ENCODE measurements at regions of chr5 and their contacts with region 1.

Region 1: DNA sequence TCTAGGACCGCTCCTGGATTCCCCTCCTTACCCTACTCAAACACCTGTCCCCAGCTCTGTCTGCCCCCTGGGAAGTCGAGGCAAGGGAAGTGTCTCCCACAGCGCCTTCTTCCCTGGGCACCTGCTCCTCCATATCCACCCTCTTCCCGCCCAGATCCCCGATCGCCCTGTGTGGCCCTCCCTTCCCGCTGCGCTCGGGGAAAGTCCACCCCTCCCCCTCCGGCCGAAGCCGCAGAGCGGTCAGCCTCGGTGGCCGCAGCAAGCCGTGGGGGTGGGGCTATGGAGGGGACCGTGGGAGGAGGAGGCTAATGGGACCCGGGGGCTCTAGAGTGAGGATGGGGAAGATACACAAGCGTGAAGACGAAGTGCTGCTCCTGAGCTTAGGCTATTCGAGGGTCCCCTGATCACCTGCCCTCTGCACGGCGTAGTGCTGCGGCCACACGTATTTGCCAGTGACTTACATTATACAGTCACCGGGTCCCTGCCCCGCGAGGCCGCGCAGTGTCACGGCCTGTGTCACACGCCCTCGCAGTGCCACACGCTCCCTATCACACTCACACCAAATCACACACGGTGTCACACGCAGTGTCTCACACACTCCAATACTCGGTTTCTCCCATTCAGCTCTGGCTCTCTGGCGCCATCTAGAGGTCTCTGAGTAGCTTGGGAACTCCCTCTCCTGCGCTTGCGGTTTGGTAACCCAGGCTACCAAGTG is 658 bp upstream of the PCDH1 start:
- DNase-seq: peak; percentile 80
- ATAC-seq: peak; percentile 82
- H3K4me3 ChIP-seq: peak overlapping the region; percentile 40
- H3K27ac ChIP-seq: no peak overlapping the region
- H3K4me1 ChIP-seq: peaks cover 8% of the 10 kb centered on the region; the same call in 1 of the 2 replicates
- H3K27me3 ChIP-seq: peaks cover 85% of the 10 kb centered on the region
- CTCF ChIP-seq: peak; percentile 96
- POLR2A ChIP-seq: 0 out of 2 replicates have a peak, but pooled peaks have one; percentile 48
- RAD21 ChIP-seq: peak; percentile 95

Region 2: DNA sequence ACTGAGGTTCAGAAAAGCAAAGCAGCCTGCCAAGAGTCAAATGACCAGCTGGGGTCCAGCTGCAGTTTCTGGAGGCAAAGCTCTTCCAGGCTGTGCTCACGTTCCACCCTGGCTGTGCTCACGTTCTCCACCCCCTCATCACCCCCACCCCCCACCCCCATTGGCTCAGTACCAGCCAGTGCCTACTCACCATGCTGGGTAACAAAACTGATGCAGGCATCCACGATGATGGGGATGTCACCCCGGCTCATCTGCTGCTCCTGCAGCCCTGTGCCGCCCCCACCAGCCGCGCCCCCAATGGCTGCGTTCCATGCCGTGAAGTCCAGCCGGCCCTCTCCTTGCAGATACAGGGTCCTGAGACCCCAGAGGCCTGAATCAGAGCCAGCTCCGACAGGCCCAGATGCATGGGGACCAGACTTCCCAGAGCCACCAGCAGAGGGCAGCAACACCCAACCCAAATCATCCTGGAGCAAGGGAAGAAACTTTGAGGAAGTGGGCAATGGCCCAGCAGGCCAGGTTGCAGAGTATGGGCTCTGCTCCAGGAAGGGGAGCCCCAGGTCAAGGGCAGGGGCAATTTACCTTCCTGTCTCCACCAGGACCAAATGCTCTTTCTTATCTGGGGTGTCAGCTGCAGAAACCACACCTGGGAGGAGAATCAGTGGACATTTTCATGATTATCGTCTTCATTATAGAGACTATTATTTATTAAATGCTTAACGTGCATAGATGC is 214.0 kb before region 1 on chr5:
- CTCF ChIA-PET with region 1: interaction called, 4 read pairs
- POLR2A ChIA-PET with region 1: no interaction called
- dilution Hi-C with region 1: no loop called
- in situ Hi-C with region 1: no loop called
- intact Hi-C with region 1: loop called (anchors 1 kb)
- DNase-seq: peak; percentile 58
- ATAC-seq: peak; percentile 93
- H3K4me3 ChIP-seq: no peak overlapping the region
- H3K27ac ChIP-seq: no peak overlapping the region
- H3K4me1 ChIP-seq: no peaks in the 10 kb centered on the region
- H3K27me3 ChIP-seq: no peaks in the 10 kb centered on the region
- CTCF ChIP-seq: peak; percentile 88
- POLR2A ChIP-seq: no peak
- RAD21 ChIP-seq: peak; percentile 83

Region 3: DNA sequence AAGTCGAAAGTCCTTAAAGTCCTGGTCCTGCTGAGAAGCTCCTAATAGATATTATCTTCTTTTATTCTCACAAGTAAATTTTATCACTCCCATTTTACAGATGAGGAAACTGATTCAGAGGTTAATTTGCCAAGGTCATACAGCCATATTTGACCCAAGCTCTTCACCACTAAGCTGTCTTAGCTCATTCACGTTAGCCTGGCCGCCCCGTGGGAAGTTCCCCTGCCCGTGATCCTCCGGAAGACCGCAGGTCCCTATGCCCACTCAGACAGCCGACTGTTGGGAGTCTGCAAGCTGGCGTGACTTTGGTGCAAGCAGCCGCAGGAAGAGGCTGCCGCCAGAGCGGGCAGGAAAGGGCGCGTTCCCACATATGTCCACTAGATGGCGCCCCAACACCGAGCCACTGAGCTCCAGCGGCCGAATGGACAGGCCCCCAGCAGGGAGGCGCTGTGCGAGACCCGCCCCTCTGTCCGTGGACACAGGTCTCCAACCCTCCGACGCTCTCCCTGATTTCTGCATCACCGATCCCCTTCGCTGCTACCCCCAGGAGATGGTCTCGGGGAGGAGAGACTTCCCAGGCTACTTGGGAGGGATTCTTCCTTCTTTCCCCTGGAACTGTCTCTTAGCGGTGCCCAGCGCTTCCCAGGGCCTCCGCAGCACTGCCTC is 186.9 kb before region 1 on chr5:
- CTCF ChIA-PET with region 1: interaction called, 31 read pairs
- POLR2A ChIA-PET with region 1: no interaction called
- dilution Hi-C with region 1: no loop called
- in situ Hi-C with region 1: loop called (anchors 5 kb)
- intact Hi-C with region 1: loop called (anchors 1 kb)
- DNase-seq: peak; percentile 60
- ATAC-seq: peak; percentile 99
- H3K4me3 ChIP-seq: peak overlapping the region; percentile 43
- H3K27ac ChIP-seq: no peak overlapping the region
- H3K4me1 ChIP-seq: no peaks in the 10 kb centered on the region; the same call in 1 of the 2 replicates
- H3K27me3 ChIP-seq: peaks cover 49% of the 10 kb centered on the region
- CTCF ChIP-seq: peak; percentile 99
- POLR2A ChIP-seq: peak; percentile 53; the same call in 1 of the 2 replicates
- RAD21 ChIP-seq: peak; percentile 99

Region 4: DNA sequence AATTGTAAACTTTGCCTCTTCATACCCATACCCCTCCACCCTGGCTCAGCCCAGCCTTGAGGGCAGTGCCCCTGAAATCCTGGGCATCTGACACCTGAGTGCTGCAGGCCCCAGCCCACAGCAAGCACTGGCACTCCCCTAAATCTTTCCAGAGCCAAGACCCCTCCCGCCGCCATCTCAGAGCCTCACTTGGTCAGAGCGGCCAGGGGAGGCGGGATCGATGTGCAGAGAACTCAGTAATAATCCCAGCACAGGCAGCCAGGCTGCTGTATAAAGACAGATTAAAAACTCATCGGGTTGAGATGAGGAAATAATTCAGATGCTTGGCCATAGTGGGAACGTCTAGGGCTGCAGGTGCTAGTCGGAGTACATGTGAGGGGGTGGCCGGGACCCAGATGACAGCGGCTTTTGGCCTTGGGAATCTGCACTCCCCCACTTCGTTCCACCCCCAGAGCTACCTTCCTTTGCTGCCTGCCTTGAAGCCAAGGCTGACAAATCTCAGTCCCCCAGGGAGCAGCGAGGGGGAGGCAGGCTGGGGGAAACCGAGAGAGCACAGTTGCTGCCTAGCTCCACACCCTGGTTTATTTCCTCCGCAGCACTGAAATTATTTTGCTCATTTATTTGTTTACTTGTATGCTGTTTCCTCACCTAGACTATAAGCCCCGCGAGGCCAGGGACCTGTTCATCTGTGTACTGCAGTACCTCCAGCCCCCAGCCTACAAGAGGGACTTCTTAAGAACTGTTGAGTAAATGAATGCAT is 177.3 kb before region 1 on chr5:
- CTCF ChIA-PET with region 1: interaction called, 28 read pairs
- POLR2A ChIA-PET with region 1: no interaction called
- dilution Hi-C with region 1: no loop called
- in situ Hi-C with region 1: loop called (anchors 5 kb)
- intact Hi-C with region 1: loop called (anchors 1 kb)
- DNase-seq: no peak
- ATAC-seq: no peak
- H3K4me3 ChIP-seq: no peak overlapping the region
- H3K27ac ChIP-seq: no peak overlapping the region
- H3K4me1 ChIP-seq: no peaks in the 10 kb centered on the region
- H3K27me3 ChIP-seq: peaks cover 92% of the 10 kb centered on the region
- CTCF ChIP-seq: no peak
- POLR2A ChIP-seq: no peak
- RAD21 ChIP-seq: no peak

Region 5: GRCh38 chr5:141757402-141757801 is 121.5 kb before region 1 on chr5:
- CTCF ChIA-PET with region 1: interaction called, 7 read pairs
- POLR2A ChIA-PET with region 1: no interaction called
- dilution Hi-C with region 1: no loop called
- in situ Hi-C with region 1: no loop called
- intact Hi-C with region 1: loop called (anchors 1 kb)
- DNase-seq: peak; percentile 41
- ATAC-seq: peak; percentile 72; the same call in 1 of the 2 replicates
- H3K4me3 ChIP-seq: no peak overlapping the region
- H3K27ac ChIP-seq: no peak overlapping the region
- H3K4me1 ChIP-seq: no peaks in the 10 kb centered on the region
- H3K27me3 ChIP-seq: peaks cover 76% of the 10 kb centered on the region
- CTCF ChIP-seq: peak; percentile 55
- POLR2A ChIP-seq: no peak
- RAD21 ChIP-seq: peak; percentile 71

Region 6: GRCh38 chr5:141889282-141889871 is 10.5 kb after region 1 on chr5:
- CTCF ChIA-PET with region 1: interaction called, 12 read pairs
- POLR2A ChIA-PET with region 1: no interaction called
- dilution Hi-C with region 1: no loop called
- in situ Hi-C with region 1: no loop called
- intact Hi-C with region 1: no loop called
- DNase-seq: no peak
- ATAC-seq: peak; percentile 40; the same call in 1 of the 2 replicates
- H3K4me3 ChIP-seq: no peak overlapping the region
- H3K27ac ChIP-seq: no peak overlapping the region
- H3K4me1 ChIP-seq: no peaks in the 10 kb centered on the region
- H3K27me3 ChIP-seq: peaks cover 12% of the 10 kb centered on the region
- CTCF ChIP-seq: peak; percentile 44
- POLR2A ChIP-seq: no peak
- RAD21 ChIP-seq: peak; percentile 35

Region 7: GRCh38 chr5:141960449-141961202 is 81.8 kb after region 1 on chr5:
- CTCF ChIA-PET with region 1: interaction called, 8 read pairs
- POLR2A ChIA-PET with region 1: no interaction called
- dilution Hi-C with region 1: no loop called
- in situ Hi-C with region 1: loop called (anchors 5 kb)
- intact Hi-C with region 1: no loop called
- DNase-seq: peak; percentile 75
- ATAC-seq: peak; percentile 98
- H3K4me3 ChIP-seq: no peak overlapping the region
- H3K27ac ChIP-seq: no peak overlapping the region
- H3K4me1 ChIP-seq: no peaks in the 10 kb centered on the region
- H3K27me3 ChIP-seq: peaks cover 2% of the 10 kb centered on the region; the same call in 1 of the 2 replicates
- CTCF ChIP-seq: peak; percentile 90
- POLR2A ChIP-seq: no peak
- RAD21 ChIP-seq: peak; percentile 80

Measured in IMR-90 (cell line).